PC-3 (cell line): ENCODE measurements at regions of chr6 and their contacts with region 1.

Region 1: GRCh38 chr6:116355796-116356195 is 15.0 kb upstream of the DSE start:
- DNase-seq: no peak
- ATAC-seq: no peak
- H3K4me3 ChIP-seq: no peak overlapping the region
- H3K27ac ChIP-seq: no peak overlapping the region
- H3K4me1 ChIP-seq: no peaks in the 10 kb centered on the region
- H3K27me3 ChIP-seq: no peaks in the 10 kb centered on the region
- CTCF ChIP-seq: no peak

Region 2: GRCh38 chr6:116298973-116299372 is 56.8 kb before region 1 on chr6:
- CTCF ChIA-PET with region 1: no interaction called
- POLR2A ChIA-PET with region 1: no interaction called
- intact Hi-C with region 1: loop called (anchors 2 kb)
- DNase-seq: no peak
- ATAC-seq: no peak
- H3K4me3 ChIP-seq: no peak overlapping the region
- H3K27ac ChIP-seq: no peak overlapping the region
- H3K4me1 ChIP-seq: no peaks in the 10 kb centered on the region
- H3K27me3 ChIP-seq: no peaks in the 10 kb centered on the region
- CTCF ChIP-seq: no peak